ENCODE measurements at regions of chrX and their contacts with region 1.

Region 1: GRCh38 chrX:150772150-150772970 is 79.2 kb downstream of the MTMR1 start:
- DNase-seq: peak; percentile 62 to 97 (median 82)

Region 2: DNA sequence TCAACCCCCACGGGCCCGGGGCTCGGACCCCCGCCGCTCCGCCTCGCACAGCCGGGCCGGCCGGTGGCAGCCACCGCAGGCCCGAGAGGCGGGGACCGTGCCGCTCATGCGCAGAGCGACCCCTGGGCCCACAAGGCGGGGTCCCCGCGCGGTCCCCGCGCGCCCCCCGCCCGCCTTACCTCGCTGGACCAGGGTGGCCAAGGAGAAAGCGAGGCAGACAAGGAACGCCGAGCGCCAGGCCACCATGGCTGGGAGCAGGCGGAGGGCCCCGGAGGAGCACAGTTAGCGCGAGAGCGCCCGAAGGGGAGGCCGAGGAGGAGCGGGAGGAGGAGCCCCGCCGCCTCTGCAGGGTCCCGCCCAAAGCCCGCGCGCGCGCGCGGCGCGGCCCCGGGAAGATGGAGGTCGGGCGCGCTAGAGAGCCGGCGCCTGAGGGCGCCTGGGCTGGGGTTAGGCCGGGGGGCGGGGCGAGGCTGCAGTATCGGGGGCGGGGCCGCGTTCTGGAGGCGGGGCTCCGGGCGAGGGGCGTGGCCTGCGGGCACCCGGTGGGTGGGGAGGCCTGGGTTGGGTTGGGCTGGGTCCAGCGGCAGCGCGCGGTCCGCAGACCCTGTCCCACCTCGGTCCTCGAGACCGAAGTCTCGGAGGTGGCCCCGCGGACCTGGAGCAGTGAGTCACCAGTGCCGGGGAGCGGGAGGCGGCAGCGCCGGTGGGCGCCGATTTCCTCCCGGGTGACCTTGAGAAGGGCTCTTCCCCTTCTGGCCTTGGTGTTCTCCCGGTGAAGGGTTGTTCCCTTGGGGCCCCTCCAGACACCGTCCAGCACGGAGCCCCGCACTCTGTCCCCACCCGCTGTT is 126.2 kb after region 1 on chrX and contains the start of gene CD99L2:
- intact Hi-C with region 1: loop called (anchors 10 kb)
- DNase-seq: peak; percentile 76 to 98 (median 86)

Region 3: DNA sequence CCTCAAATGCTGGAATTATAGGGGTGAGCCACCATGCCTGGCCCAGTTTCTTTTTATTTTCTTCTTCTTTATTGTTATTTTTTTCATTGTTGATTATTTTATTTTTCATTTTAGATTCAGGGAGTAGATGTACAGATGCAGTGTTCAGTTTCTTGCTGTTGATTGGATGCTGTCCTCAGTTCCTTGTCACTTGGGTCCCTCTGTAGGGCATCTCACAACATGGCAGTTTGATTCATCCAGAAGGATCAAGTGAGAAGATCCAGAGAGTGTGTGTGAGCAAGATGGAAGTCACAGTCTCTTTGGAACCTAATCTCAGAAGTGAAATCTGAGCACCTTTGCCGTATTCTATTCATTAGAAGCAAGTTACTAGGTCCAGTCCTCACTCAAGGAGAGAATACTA is 231.7 kb after region 1 on chrX:
- intact Hi-C with region 1: loop called (anchors 5 kb)
- DNase-seq: no peak

Region 4: GRCh38 chrX:151082076-151082948 is 310.0 kb after region 1 on chrX:
- intact Hi-C with region 1: loop called (anchors 1 kb)
- DNase-seq: peak; percentile 20 to 95 (median 60)